Right ventricle myocardium inferior (tissue), 1 donor: ENCODE measurements at regions of chr7 and their contacts with region 1.

Region 1: DNA sequence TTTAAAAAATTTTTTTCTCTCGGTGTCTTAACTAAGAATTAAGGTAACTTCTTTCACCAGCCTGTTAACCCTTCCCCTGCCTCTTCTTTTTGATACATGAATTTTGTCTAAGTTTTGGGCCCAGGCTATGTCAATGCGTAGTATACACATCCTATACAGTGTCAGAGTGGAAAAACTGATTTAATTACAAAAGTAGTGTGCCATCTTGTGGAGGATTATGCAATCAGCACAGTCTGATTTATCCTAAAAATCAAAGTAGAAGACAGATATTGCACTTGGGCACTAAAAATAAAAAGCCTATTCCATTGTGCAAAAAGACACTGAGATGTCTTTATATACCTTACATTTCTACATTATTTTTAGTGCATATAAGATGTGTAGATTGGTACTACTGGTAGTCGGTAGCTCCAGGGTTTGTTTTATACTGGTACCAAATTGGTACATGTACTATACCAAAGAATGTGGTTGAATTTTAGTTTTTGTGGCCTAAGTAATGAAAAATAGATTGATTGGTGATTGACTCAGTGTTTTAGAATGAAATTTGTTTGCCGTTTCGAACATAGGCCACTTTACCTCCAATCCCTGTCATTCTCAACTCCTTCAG is 96.6 kb downstream of the MKLN1 start:
- DNase-seq: no peak
- ATAC-seq: peak; percentile 61

Region 2: GRCh38 chr7:131071786-131072504 is 352.4 kb before region 1 on chr7:
- intact Hi-C with region 1: loop called (anchors 5 kb)
- DNase-seq: no peak
- ATAC-seq: peak; percentile 38

Region 3: DNA sequence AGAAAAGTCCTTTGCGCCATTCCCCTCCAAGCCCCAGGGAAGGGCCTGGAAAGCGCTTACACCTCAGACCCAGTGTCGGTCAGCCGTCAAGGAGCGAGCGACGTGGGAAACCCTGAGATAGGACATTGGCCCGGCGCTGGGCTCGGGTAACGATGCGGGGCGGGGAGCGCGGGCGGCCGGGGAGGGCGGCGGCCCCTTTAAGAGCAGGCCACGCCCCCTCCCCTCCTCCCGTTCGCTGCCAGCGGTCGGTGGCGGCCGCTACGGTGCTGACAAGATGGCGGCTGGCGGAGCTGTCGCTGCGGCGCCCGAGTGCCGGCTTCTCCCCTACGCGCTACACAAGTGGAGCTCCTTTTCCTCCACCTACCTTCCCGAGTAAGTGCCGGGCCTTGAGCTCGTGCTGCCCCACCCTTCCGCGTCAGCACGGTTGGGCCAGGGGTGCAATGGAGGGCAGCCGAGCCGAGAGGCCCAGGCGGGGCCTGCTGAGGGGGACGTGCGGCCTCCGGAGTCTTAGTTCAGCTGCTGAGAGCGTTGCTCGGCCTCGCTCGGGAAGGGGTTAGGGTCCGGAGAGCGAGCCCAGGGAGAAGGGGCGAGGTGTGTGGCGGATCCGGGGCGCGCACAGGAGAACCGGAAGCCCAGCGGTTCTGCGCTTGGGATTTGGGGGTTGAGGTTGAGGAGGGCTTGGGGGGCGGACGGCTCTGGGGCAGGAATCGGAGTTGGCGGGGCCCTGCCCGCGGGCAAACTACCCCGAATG is 96.5 kb before region 1 on chr7 and contains the start of gene MKLN1:
- intact Hi-C with region 1: loop called (anchors 5 kb)
- DNase-seq: peak; percentile 99
- ATAC-seq: peak; percentile 98
- total RNA-seq, gene MKLN1: 39.3 TPM